PC-3 (cell line): ENCODE measurements at regions of chr17 and their contacts with region 1.

Region 1: DNA sequence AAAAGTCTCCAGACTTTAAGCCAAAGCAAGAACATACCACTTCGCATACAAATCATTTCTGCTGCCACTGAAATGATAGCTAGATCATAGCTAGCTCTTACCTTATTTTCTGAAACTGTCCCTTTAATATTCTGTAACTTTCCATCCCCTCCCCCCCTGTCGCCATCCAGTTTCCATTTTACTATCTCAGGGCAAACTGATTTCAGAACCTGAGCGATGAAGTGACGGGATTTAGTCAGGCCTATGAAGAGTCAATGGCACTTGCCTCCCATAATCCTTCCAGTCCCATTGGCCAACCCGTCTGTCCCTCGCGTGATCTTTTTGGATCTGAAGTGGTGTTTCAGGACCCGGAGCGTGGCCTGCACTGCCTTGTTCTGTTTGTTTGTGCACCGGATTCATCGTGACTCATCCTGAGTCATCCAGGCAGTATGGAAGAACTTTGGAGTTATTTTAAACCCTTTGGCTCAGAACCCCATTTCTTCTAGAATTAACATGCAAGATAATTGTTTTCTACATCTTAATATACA is 199.8 kb upstream of the CHMP6 start:
- DNase-seq: peak; percentile 99
- ATAC-seq: peak; percentile 94
- H3K4me3 ChIP-seq: peak overlapping the region; percentile 25; the same call in 1 of the 2 replicates
- H3K27ac ChIP-seq: peak overlapping the region; percentile 95
- H3K4me1 ChIP-seq: peaks cover 58% of the 10 kb centered on the region
- H3K27me3 ChIP-seq: no peaks in the 10 kb centered on the region
- CTCF ChIP-seq: no peak

Region 2: DNA sequence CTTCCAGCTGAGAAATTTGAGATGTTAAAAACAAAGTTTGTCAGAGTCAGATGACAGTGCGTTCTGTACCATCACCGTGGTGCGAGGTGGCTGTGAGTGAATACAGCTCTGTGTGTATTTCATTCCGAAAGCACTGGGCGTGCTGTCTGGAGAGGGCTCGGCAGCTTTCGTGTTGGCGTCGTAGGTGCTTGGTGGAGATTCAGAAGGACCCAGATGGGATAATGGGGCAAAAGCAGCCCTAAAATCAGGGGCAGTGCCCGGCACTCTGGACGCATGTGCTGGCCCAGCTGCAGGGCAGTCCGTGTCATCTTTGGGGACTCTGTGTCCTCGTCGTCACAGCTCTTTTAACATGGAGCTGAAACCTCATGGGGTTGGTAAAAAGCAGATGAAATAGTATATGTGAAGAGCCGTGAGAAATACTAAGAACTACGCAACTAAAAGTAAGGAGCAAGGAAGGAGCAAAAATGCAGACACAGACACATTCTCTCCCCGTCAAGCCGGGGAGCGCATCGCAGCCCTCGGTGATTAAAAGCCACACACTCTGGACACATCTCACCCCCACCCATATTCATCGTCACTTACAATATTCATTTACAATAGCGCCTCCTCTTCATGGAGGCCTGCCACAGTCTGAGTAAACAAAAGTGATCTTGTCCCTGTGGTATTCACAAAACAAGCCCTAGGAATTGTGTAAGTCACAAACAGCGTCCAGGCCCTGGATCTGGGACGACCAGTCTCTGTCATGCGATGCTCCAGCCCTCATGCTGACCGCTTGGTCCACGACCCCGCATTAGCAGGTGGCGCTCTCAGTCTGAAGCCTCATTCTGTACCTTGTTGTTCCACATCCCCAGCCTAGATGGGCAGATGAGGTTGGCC is 40.5 kb before region 1 on chr17:
- CTCF ChIA-PET with region 1: no interaction called
- POLR2A ChIA-PET with region 1: no interaction called
- intact Hi-C with region 1: no loop called
- DNase-seq: no peak
- ATAC-seq: no peak
- H3K4me3 ChIP-seq: no peak overlapping the region
- H3K27ac ChIP-seq: no peak overlapping the region
- H3K4me1 ChIP-seq: no peaks in the 10 kb centered on the region
- H3K27me3 ChIP-seq: no peaks in the 10 kb centered on the region
- CTCF ChIP-seq: 0 out of 2 replicates have a peak, but pooled peaks have one; percentile 15

Region 3: DNA sequence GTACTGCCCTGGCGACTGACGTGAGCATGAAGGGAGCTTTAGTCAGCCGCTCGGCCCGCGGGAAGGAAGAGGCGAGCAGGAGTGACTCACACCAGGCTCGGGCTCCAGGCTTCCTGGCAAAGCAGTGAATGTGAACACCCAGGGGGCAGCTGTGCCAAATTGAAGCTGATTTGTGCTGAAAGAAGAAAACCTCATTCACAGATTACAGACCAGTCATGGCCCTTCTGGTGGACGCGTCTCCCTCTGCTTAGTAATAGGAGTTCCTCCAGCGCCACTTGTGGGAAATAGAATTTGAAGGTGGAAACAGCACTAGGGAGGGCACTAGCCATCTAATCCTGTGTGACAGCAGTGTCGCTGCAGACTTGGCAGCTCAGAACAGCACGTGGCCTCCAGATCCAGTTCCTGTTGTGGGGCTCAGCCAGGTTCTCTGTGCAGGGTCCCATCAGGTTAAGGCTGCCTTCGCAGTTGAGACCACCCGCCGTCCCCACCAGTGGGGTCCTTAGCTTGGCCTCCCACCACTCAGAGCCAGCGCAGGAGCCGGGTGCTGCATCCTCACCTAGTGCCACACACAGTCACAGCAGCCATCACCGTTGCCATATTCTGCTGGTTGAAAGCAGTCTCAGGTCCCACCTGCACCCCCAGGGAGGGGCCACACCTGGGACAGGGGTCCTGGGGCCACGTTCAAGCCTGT is 35.3 kb after region 1 on chr17:
- CTCF ChIA-PET with region 1: no interaction called
- POLR2A ChIA-PET with region 1: no interaction called
- intact Hi-C with region 1: loop called (anchors 2 kb)
- DNase-seq: peak; percentile 96
- ATAC-seq: peak; percentile 99
- H3K4me3 ChIP-seq: no peak overlapping the region
- H3K27ac ChIP-seq: peak overlapping the region; percentile 96
- H3K4me1 ChIP-seq: peaks cover 36% of the 10 kb centered on the region
- H3K27me3 ChIP-seq: no peaks in the 10 kb centered on the region
- CTCF ChIP-seq: no peak; the same call in 1 of the 2 replicates

Region 4: DNA sequence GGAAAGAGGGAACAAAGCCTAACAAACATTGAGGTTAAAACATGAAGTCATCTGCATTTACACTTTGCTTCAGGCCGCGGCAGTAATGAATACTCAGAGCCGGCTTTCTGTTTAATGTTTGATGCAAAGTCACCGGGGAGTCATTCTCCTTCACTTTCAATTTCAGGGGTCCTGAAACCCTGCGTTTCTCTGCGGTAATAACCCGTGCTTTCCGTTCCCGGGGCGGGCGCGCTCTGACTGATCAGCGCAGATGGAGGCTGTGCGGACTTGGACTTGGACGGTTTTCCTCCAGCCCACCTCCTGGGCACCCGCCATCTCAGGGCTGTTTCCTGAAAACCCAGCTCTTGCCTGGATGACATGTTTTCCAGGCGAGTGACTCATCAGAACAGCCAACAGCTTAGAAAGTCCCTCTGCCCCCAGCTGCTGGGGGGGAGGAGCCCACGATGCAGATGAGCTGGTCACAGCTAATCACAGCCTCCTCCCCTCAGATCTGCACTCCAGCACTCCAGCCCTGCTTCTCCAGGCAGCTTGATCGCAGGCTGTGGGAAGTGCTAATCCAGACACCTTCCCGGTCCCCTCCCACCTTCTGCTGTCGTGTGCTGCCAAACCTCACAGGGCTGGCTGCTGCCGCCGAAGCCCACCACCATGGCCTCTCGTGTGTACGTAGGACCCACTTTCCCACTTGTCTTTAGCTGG is 41.2 kb after region 1 on chr17:
- CTCF ChIA-PET with region 1: no interaction called
- POLR2A ChIA-PET with region 1: no interaction called
- intact Hi-C with region 1: loop called (anchors 2 kb)
- DNase-seq: peak; percentile 96
- ATAC-seq: peak; percentile 98
- H3K4me3 ChIP-seq: peak overlapping the region; percentile 67
- H3K27ac ChIP-seq: peak overlapping the region; percentile 97
- H3K4me1 ChIP-seq: peaks cover 30% of the 10 kb centered on the region
- H3K27me3 ChIP-seq: no peaks in the 10 kb centered on the region
- CTCF ChIP-seq: no peak

Region 5: DNA sequence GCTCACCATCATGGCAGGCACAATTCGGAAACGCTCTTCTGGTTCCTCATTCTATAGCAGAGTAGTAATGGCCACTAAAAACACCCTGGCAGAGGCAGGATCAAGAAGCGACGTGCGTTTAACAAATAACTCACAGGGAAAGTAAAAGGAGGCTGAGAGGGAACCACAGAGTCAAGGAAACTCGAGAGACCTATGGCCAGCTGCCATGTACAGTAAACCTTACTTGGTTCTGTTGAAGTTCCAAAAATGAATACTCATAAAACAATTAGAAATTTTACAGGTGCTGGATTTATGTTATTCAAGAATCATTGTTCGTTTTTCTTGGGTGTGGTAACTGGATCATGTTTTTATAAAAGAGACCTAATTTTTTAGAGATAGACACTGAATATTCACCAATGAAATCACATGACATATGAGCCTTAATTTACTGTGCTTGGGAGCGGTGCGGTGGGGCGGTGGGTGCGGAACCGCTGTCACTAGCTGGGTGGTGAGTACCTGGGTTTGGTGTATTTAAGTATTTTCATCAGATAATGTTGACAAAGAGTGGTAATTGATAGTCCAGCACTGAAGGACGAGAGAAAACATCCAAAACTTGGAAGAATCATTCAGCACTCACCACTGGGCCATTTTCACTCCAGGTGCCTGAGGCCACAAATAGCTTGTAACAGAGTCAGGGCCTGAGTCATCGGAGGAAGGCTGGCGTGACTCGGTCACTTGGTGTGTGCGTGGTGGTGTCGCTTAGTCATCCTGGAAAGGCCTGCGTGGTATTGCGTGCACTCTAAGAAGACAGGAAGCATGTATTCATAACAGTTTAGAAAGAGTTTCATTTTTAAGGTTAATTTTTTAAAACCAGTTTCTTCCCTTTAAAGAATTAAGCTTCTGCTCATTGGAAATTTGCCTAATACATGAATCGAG is 64.4 kb after region 1 on chr17:
- CTCF ChIA-PET with region 1: no interaction called
- POLR2A ChIA-PET with region 1: no interaction called
- intact Hi-C with region 1: loop called (anchors 2 kb)
- DNase-seq: peak; percentile 98
- ATAC-seq: peak; percentile 93
- H3K4me3 ChIP-seq: peak overlapping the region; percentile 35
- H3K27ac ChIP-seq: peak overlapping the region; percentile 100
- H3K4me1 ChIP-seq: peaks cover 45% of the 10 kb centered on the region
- H3K27me3 ChIP-seq: no peaks in the 10 kb centered on the region
- CTCF ChIP-seq: no peak

Region 6: GRCh38 chr17:80959330-80960036 is 167.7 kb after region 1 on chr17:
- CTCF ChIA-PET with region 1: no interaction called
- POLR2A ChIA-PET with region 1: no interaction called
- intact Hi-C with region 1: no loop called
- DNase-seq: peak; percentile 45
- ATAC-seq: peak; percentile 70
- H3K4me3 ChIP-seq: no peak overlapping the region
- H3K27ac ChIP-seq: no peak overlapping the region
- H3K4me1 ChIP-seq: peaks cover 9% of the 10 kb centered on the region; the same call in 1 of the 2 replicates
- H3K27me3 ChIP-seq: no peaks in the 10 kb centered on the region
- CTCF ChIP-seq: no peak